ENCODE measurements at regions of chr20 and their contacts with region 1.

Region 1: GRCh38 chr20:54219751-54220426 is 12.0 kb downstream of the PFDN4 start:
- DNase-seq: no peak
- H3K4me3 ChIP-seq: no peak overlapping the region
- CTCF ChIP-seq: no peak
- POLR2A ChIP-seq: no peak

Region 2: GRCh38 chr20:54167909-54168872 is 51.7 kb before region 1 on chr20:
- intact Hi-C with region 1: no loop called
- DNase-seq: no peak
- H3K4me3 ChIP-seq: no peak overlapping the region
- CTCF ChIP-seq: no peak
- POLR2A ChIP-seq: no peak

Region 3: GRCh38 chr20:54649511-54649962 is 429.6 kb after region 1 on chr20:
- intact Hi-C with region 1: loop called (anchors 10 kb)
- DNase-seq: peak; percentile 68 to 93
- H3K4me3 ChIP-seq: no peak overlapping the region
- CTCF ChIP-seq: no peak
- POLR2A ChIP-seq: no peak

Measured in lower leg skin (tissue), 4 donors.